CD14-positive monocyte (primary cell): ENCODE measurements at regions of chr18 and their contacts with region 1.

Region 1: GRCh38 chr18:13823707-13824395 is at the start of gene MC5R:
- DNase-seq: peak; percentile 5 to 43 (median 34)
- H3K4me3 ChIP-seq: peak within 1 kb of the TSS in 1 of 3 experiments; percentile 60
- H3K4me3 Mint-ChIP-seq: peak within 1 kb of the TSS in 1 of 2 donors; percentile 72
- H3K27ac ChIP-seq: no peak within 1 kb of the TSS
- H3K27ac Mint-ChIP-seq: no peak within 1 kb of the TSS
- H3K4me1 ChIP-seq: peaks cover 0 to 6% of the 10 kb centered on the region in 2 donors
- H3K4me1 Mint-ChIP-seq: peaks cover 5% of the 10 kb centered on the region
- H3K27me3 ChIP-seq: peaks cover 0 to 14% of the 10 kb centered on the region in 2 donors
- H3K27me3 Mint-ChIP-seq: peaks cover 19 to 26% (median 24%) of the 10 kb centered on the region in 3 donors
- CTCF ChIP-seq: peak; percentile 72
- polyA plus RNA-seq, gene MC5R: 0.12 to 0.13 TPM in 2 of 3 donors, not detected in the other

Region 2: DNA sequence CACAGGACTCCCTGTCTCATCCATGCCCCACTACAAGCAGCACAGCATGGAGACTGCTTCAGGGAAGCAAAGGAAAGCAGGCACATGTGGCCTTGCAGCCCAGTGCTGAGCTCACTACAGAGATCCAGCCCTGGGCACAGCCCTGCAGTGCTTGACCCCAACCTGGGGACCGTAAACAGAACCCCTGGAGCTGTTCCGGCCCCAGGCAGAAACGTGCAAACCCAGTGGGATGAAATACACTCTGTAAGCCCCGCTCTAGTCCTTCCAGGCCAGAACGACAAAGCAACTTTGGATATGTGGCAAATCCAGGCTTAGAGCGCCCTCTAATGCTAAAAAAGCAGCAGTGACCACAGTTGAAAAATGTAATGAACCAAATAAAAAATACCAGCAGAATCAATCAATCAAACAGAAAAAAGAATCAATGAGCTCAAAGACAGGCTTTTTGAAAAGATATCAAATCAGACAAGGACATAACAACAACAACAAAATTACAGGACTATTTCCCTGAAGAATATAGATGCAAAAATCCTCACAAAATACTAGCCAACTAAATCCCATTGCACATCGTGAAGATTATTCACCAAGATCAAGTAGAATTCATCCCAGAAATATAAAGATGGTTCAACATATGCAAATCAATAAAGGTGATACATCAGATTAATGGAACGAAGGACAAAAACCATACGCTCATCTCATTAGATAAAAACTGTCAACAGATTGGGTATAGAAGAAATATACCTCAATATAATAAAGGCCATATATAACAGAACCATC is 262.8 kb after region 1 on chr18:
- intact Hi-C with region 1: loop called in 1 of 2 experiments (anchors 10 kb)
- DNase-seq: no peak
- H3K4me3 ChIP-seq: no peak overlapping the region
- H3K4me3 Mint-ChIP-seq: no peak overlapping the region
- H3K27ac ChIP-seq: no peak overlapping the region
- H3K27ac Mint-ChIP-seq: no peak overlapping the region
- H3K4me1 ChIP-seq: no peaks in the 10 kb centered on the region
- H3K4me1 Mint-ChIP-seq: no peaks in the 10 kb centered on the region
- H3K27me3 ChIP-seq: no peaks in the 10 kb centered on the region
- H3K27me3 Mint-ChIP-seq: no peaks in the 10 kb centered on the region
- CTCF ChIP-seq: peak; percentile 52